B cell (primary cell): ENCODE measurements at regions of chr10 and their contacts with region 1.

Region 1: GRCh38 chr10:23314835-23315239 is 29.8 kb downstream of the C10orf67 start:
- DNase-seq: peak; percentile 79
- ATAC-seq: peak; percentile 56
- H3K4me3 ChIP-seq: no peak overlapping the region
- H3K4me3 Mint-ChIP-seq: no peak overlapping the region
- H3K27ac ChIP-seq: no peak overlapping the region
- H3K27ac Mint-ChIP-seq: no peak overlapping the region
- H3K4me1 ChIP-seq: no peaks in the 10 kb centered on the region
- H3K4me1 Mint-ChIP-seq: no peaks in the 10 kb centered on the region
- H3K27me3 ChIP-seq: peaks cover 0 to 3% (median 0%) of the 10 kb centered on the region in 4 experiments
- H3K27me3 Mint-ChIP-seq: peaks cover 10% of the 10 kb centered on the region
- CTCF ChIP-seq: peak; percentile 92

Region 2: GRCh38 chr10:23217471-23217870 is 97.4 kb before region 1 on chr10:
- CTCF ChIA-PET with region 1: no interaction called
- POLR2A ChIA-PET with region 1: no interaction called
- intact Hi-C with region 1: no loop called
- DNase-seq: no peak
- ATAC-seq: no peak
- H3K4me3 ChIP-seq: no peak overlapping the region
- H3K4me3 Mint-ChIP-seq: no peak overlapping the region
- H3K27ac ChIP-seq: no peak overlapping the region
- H3K27ac Mint-ChIP-seq: no peak overlapping the region
- H3K4me1 ChIP-seq: no peaks in the 10 kb centered on the region
- H3K4me1 Mint-ChIP-seq: no peaks in the 10 kb centered on the region
- H3K27me3 ChIP-seq: no peaks in the 10 kb centered on the region
- H3K27me3 Mint-ChIP-seq: peaks cover 11% of the 10 kb centered on the region
- CTCF ChIP-seq: no peak

Region 3: DNA sequence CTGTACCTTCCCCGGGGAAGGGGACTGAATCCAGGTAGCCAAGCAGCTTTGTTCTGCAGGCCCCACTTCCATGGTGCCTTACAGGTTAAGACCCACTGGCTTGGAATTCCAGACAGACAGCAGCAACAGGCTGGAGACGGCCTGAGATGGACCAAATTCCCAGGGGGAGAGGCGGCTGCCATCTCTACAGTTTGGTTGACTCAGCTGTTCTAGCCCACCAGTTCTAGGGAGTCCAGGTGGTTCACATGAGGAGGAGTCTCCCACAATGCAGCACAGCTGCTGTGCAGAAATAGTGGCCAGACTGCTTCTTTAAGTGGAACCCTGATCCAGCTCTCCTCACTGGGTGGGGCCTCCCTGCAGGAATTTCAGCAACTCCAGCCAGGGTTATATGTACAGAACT is 44.3 kb before region 1 on chr10:
- CTCF ChIA-PET with region 1: no interaction called
- POLR2A ChIA-PET with region 1: no interaction called
- intact Hi-C with region 1: no loop called
- DNase-seq: no peak
- ATAC-seq: no peak
- H3K4me3 ChIP-seq: no peak overlapping the region
- H3K4me3 Mint-ChIP-seq: no peak overlapping the region
- H3K27ac ChIP-seq: no peak overlapping the region
- H3K27ac Mint-ChIP-seq: no peak overlapping the region
- H3K4me1 ChIP-seq: no peaks in the 10 kb centered on the region
- H3K4me1 Mint-ChIP-seq: no peaks in the 10 kb centered on the region
- H3K27me3 ChIP-seq: peaks cover 0 to 6% (median 0%) of the 10 kb centered on the region in 4 experiments
- H3K27me3 Mint-ChIP-seq: no peaks in the 10 kb centered on the region
- CTCF ChIP-seq: no peak

Region 4: GRCh38 chr10:23325132-23325531 is 10.3 kb after region 1 on chr10:
- CTCF ChIA-PET with region 1: interaction called, 11 read pairs
- POLR2A ChIA-PET with region 1: no interaction called
- intact Hi-C with region 1: no loop called
- DNase-seq: no peak
- ATAC-seq: no peak
- H3K4me3 ChIP-seq: no peak overlapping the region
- H3K4me3 Mint-ChIP-seq: no peak overlapping the region
- H3K27ac ChIP-seq: no peak overlapping the region
- H3K27ac Mint-ChIP-seq: no peak overlapping the region
- H3K4me1 ChIP-seq: peaks cover 0 to 3% of the 10 kb centered on the region in 2 donors
- H3K4me1 Mint-ChIP-seq: peaks cover 2% of the 10 kb centered on the region
- H3K27me3 ChIP-seq: peaks cover 0 to 6% (median 0%) of the 10 kb centered on the region in 4 experiments
- H3K27me3 Mint-ChIP-seq: peaks cover 19% of the 10 kb centered on the region
- CTCF ChIP-seq: no peak

Region 5: DNA sequence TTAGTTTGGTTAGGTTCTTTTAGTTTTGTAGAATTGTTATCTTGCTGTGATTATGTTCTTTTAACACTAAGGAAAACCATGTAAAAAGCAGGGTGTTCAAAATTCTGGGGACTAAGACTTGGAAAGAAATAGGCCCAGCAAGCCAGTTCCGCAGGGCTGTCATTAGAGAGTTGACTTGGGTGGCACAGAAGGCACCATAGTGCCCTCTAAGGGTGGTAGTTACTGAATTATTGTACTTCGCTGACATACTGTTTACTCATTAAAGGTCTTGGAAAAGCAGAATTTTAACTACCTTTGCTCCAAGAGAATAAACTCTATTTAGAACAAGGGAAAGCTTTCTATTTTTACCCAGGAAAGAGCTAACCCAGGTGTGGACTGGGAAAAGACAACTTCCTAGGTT is 210.6 kb after region 1 on chr10:
- CTCF ChIA-PET with region 1: interaction called, 450 read pairs
- POLR2A ChIA-PET with region 1: no interaction called
- intact Hi-C with region 1: loop called (anchors 1 kb)
- DNase-seq: peak; percentile 65
- ATAC-seq: peak; percentile 68
- H3K4me3 ChIP-seq: no peak overlapping the region
- H3K4me3 Mint-ChIP-seq: no peak overlapping the region
- H3K27ac ChIP-seq: no peak overlapping the region
- H3K27ac Mint-ChIP-seq: no peak overlapping the region
- H3K4me1 ChIP-seq: peaks cover 17 to 19% of the 10 kb centered on the region in 2 donors
- H3K4me1 Mint-ChIP-seq: peaks cover 33% of the 10 kb centered on the region
- H3K27me3 ChIP-seq: no peaks in the 10 kb centered on the region
- H3K27me3 Mint-ChIP-seq: peaks cover 6% of the 10 kb centered on the region
- CTCF ChIP-seq: peak; percentile 72

Region 6: DNA sequence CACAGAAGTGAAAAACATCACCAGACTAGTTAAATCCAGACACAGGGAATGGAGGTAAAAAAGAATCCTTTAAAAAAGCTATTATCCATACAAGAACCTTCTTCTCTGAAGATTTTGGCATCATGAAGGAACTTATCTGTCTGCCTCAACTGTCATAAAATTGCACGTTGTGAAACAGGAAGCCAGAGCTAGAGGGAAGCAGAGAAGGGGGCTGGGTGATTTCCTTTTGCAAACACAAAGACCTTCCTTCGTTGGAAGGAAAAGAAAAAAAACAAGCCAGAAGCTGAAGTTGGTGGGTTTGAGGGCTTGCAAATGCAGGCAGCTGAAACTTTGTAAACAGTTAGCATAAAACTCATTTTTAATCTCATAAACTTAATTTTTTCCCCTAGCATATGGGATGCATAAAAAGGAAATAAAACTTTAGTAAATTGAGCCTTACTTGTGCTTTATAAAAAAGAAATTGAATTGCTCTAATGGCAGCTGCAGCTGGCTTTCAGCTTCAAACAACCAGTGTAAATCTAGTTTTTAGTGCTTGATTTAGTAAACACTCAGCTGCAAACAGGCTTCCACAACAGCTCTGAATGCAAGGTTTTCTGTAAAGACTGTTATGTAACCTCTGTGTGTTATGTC is 225.7 kb after region 1 on chr10:
- CTCF ChIA-PET with region 1: interaction called, 28 read pairs
- POLR2A ChIA-PET with region 1: no interaction called
- intact Hi-C with region 1: no loop called
- DNase-seq: no peak
- ATAC-seq: no peak
- H3K4me3 ChIP-seq: peak overlapping the region in 1 of 5 experiments; percentile 9
- H3K4me3 Mint-ChIP-seq: peak overlapping the region; percentile 10
- H3K27ac ChIP-seq: no peak overlapping the region
- H3K27ac Mint-ChIP-seq: no peak overlapping the region
- H3K4me1 ChIP-seq: peaks cover 9 to 16% of the 10 kb centered on the region in 2 donors
- H3K4me1 Mint-ChIP-seq: peaks cover 20% of the 10 kb centered on the region
- H3K27me3 ChIP-seq: no peaks in the 10 kb centered on the region
- H3K27me3 Mint-ChIP-seq: peaks cover 11% of the 10 kb centered on the region
- CTCF ChIP-seq: no peak